Posterior vena cava (tissue), 2 donors: ENCODE measurements at regions of chr3 and their contacts with region 1.

Region 1: DNA sequence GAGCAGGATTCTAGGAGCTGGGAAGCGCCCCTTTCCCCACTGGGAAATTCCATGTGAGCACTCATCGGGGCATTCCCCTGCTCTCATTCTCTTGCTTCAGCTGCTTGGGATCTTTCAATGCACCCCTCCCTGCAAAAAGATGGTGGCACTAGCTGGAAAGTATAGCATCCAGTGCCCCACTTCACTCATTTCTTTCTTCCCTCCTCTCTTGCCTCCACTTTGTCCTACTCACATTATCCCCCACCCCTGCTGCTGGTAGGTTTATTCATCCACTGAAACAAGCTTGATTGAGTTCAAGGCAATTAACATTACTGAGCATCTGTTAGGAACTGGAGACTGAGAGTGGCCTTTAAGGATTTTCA is 84.8 kb upstream of the LIMD1 start:
- DNase-seq: no peak

Region 2: GRCh38 chr3:45656575-45657363 is 147.0 kb after region 1 on chr3:
- intact Hi-C with region 1: loop called (anchors 2 to 5 kb)
- DNase-seq: peak; percentile 97